ENCODE measurements at regions of chr1 and their contacts with region 1.

Region 1: DNA sequence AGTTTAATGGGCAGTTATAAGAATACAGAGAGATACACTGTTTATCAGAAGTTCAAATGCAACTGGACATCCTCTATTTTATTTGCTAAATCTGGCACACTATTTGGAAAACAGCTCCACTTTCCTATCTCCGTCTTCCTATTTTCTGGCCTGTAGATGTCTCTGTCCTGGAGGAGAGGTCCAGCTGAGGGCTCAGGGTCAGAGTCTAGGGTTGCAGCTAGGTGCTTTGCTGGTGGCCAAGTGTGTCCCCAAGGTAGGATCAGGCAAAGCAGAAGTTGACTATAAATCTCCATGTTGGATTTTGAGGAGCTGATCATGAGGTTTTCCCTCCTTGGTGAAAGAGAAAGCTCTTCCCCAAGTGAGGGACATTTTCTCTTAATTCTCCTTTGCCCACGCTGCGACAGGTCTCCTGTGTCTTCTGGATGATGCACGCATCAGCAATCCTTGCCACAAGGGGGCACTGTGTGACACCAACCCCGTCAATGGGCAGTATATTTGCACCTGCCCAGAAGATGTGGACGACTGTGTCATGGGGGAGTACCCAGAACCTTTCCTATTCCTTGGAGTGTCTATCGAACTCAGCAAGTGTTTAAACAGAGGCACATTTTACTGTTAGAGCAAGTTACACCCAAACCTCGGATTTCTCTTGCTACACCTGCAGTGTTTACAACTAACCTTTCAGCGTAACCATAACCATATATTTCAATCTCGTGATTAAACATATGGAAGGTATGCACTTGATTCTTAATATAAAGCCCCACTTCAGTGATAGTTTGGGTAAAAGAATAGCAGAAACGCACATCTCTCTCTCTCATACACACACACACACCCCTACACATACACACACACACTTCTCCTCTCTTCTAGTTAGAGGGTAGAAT is 10.2 kb downstream of the ADAM30 start:
- DNase-seq: no peak
- H3K4me3 ChIP-seq: no peak overlapping the region
- H3K27ac ChIP-seq: no peak overlapping the region
- H3K27me3 ChIP-seq: no peaks in the 10 kb centered on the region
- CTCF ChIP-seq: peak; percentile 72

Region 2: DNA sequence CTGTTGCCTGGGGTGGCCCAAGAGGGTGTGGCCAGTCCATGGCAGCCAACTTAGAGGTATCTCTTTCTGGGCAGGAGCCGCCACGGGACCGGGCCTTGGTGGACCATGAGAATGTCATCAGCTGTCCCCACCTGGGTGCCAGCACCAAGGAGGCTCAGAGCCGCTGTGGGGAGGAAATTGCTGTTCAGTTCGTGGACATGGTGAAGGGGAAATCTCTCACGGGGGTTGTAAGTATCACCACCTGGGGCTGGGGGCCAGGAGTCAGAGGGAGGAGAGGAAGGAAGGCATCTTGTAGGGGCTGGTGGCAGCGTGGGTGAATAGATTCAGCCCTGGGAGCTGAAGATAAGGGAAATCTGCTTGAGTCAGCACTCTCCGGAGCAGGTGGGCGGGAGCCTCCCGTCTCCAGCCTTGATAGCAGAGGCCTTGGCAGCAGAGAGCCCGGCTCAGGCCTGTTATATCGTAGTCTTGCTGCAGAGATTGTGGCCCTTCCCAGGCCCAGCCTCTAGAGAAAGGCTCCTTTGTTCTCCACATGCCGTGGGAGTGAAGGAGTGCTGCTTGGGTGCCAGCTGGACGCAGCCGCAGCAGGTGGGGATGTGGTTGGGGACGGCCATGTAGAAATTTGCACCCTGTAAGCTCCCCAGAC is 149.0 kb before region 1 on chr1:
- CTCF ChIA-PET with region 1: no interaction called
- POLR2A ChIA-PET with region 1: no interaction called
- DNase-seq: no peak
- H3K4me3 ChIP-seq: no peak overlapping the region
- H3K27ac ChIP-seq: no peak overlapping the region
- H3K27me3 ChIP-seq: no peaks in the 10 kb centered on the region
- CTCF ChIP-seq: no peak

Region 3: GRCh38 chr1:119870917-119871596 is 15.1 kb before region 1 on chr1:
- CTCF ChIA-PET with region 1: interaction called, 23 read pairs
- POLR2A ChIA-PET with region 1: no interaction called
- DNase-seq: peak; percentile 50
- H3K4me3 ChIP-seq: no peak overlapping the region
- H3K27ac ChIP-seq: no peak overlapping the region
- H3K27me3 ChIP-seq: no peaks in the 10 kb centered on the region
- CTCF ChIP-seq: peak; percentile 98

Region 4: DNA sequence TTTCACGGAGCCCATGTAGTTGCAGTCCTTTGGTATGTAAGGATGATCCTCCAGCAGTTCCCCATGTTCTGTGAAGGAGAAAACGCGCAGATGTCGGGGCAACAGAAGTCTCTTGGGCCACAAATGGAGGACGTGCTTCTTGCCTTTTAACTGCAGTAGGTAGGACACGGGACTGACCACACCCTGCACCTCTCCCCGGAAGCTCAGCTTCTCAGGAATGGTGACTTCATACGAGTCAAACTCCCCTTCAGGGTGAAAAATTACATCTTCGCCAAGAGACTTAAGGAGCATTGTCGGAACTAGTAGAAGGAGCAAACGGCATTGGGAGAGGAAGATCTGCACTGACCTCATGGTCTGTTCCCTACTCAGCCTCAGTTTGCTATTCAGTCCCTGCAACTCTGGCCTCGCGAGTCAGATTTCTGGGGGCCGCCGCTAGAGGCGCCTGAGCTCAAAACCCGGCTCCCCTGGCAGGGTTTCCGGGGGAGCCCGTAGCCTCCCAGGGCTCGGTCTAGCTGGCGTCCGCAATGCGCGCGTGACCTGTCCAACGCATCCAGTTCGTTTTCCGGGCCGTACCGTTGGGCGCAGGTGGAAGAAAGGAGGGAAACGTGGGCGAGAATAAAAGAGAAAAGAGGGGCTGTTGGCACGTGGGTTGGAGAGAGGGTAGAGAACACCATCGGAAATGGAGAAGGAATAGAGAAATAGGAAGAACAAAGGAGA is 10.0 kb after region 1 on chr1 and contains the start of gene ADAM30:
- CTCF ChIA-PET with region 1: interaction called, 12 read pairs
- POLR2A ChIA-PET with region 1: no interaction called
- DNase-seq: no peak
- H3K4me3 ChIP-seq: no peak within 1 kb of the TSS
- H3K27ac ChIP-seq: no peak within 1 kb of the TSS
- H3K27me3 ChIP-seq: peaks cover 4% of the 10 kb centered on the region
- CTCF ChIP-seq: no peak
- polyA plus RNA-seq, gene ADAM30: not detected in 2 replicates

Measured in AG04450 (cell line).